WTC11 (cell line): ENCODE measurements at regions of chr19 and their contacts with region 1.

Region 1: GRCh38 chr19:36573020-36573885 is at the start of gene ZNF529:
- DNase-seq: peak; percentile 94
- ATAC-seq: peak; percentile 97
- H3K4me3 Mint-ChIP-seq: peak within 1 kb of the TSS; percentile 90
- H3K27ac Mint-ChIP-seq: peak within 1 kb of the TSS; percentile 98
- H3K4me1 Mint-ChIP-seq: peaks cover 18% of the 10 kb centered on the region
- H3K27me3 Mint-ChIP-seq: no peaks in the 10 kb centered on the region
- CTCF ChIP-seq: no peak
- total RNA-seq, gene ZNF529: 13.1 to 16.1 TPM (median 14.4 TPM) in 3 replicates

Region 2: GRCh38 chr19:36378625-36379509 is 194.4 kb before region 1 on chr19 and contains the start of gene ZFP14:
- CTCF ChIA-PET with region 1: no interaction called
- POLR2A ChIA-PET with region 1: no interaction called
- DNase-seq: peak; percentile 94
- ATAC-seq: peak; percentile 96
- H3K4me3 Mint-ChIP-seq: peak within 1 kb of the TSS; percentile 85
- H3K27ac Mint-ChIP-seq: peak within 1 kb of the TSS; percentile 62
- H3K4me1 Mint-ChIP-seq: peaks cover 9% of the 10 kb centered on the region
- H3K27me3 Mint-ChIP-seq: peaks cover 3% of the 10 kb centered on the region
- CTCF ChIP-seq: no peak
- total RNA-seq, gene ZFP14: 7.9 to 9.6 TPM (median 8.5 TPM) in 3 replicates

Region 3: GRCh38 chr19:36528194-36528920 is 44.9 kb before region 1 on chr19 and contains the start of gene ZNF260:
- CTCF ChIA-PET with region 1: no interaction called
- POLR2A ChIA-PET with region 1: interaction called, 14 read pairs
- DNase-seq: peak; percentile 98
- ATAC-seq: peak; percentile 96
- H3K4me3 Mint-ChIP-seq: peak within 1 kb of the TSS; percentile 99
- H3K27ac Mint-ChIP-seq: peak within 1 kb of the TSS; percentile 100
- H3K4me1 Mint-ChIP-seq: peaks cover 13% of the 10 kb centered on the region
- H3K27me3 Mint-ChIP-seq: no peaks in the 10 kb centered on the region; the same call in 1 of the 2 replicates
- CTCF ChIP-seq: no peak
- total RNA-seq, gene ZNF260: 24.1 to 29.0 TPM (median 25.3 TPM) in 3 replicates